Caco-2 (cell line): ENCODE measurements at regions of chr5 and their contacts with region 1.

Region 1: DNA sequence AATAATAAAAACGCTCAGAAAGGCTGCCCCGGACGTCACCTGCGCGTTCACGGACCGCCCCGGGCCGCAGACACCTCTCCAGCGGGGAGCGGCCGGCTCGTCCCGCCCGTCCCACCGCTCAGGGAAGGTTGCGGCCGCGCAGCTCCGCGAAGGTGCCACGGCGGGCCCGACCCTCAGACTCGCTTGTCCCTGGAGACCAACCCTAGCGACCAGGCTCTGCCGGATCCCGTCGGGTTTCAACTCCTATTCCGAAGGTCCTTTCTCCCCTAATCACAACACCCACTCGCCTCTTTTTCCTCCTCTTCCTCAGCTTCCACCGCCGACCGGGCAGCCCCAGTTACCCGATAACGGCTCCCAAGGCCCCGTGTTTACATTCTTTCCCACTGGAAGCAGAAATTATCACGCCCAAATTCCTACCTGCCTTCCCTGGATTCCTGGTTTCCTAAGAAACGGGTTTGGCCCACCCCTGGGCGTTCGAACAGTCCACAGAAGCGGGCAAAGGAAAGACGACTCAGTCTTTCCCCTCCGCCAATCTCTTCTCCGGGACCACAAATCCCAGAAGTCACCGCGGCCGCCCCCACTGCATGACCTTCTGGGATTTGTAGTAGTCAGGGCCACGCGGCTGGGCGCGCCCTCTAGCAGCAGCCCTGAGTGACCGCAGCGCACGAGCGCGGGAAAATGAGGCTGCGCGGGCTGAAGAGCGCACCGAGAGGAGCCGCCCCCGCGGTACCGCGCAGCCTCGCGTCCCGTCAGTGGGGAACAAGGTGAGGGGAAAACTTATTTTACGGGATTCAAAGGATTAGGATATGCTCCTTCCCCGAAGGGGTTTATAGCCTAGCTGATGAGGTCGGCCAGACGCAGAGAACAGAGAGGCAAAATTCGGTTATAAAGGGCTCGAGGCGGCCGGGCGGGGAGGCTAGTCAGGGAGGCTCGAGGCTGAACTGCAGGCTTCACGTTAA is at the start of gene TTC33:
- DNase-seq: peak; percentile 95 to 96
- H3K4me3 ChIP-seq: peak within 1 kb of the TSS; percentile 56
- H3K4me3 Mint-ChIP-seq: no peak within 1 kb of the TSS
- H3K27ac Mint-ChIP-seq: no peak within 1 kb of the TSS
- H3K4me1 ChIP-seq: peaks cover 8% of the 10 kb centered on the region; the same call in 1 of the 2 replicates
- H3K4me1 Mint-ChIP-seq: no peaks in the 10 kb centered on the region
- H3K27me3 ChIP-seq: no peaks in the 10 kb centered on the region
- H3K27me3 Mint-ChIP-seq: no peaks in the 10 kb centered on the region
- CTCF ChIP-seq: peak; percentile 55 to 89
- total RNA-seq, gene TTC33: 8.6 and 10.4 TPM in 2 replicates

Region 2: DNA sequence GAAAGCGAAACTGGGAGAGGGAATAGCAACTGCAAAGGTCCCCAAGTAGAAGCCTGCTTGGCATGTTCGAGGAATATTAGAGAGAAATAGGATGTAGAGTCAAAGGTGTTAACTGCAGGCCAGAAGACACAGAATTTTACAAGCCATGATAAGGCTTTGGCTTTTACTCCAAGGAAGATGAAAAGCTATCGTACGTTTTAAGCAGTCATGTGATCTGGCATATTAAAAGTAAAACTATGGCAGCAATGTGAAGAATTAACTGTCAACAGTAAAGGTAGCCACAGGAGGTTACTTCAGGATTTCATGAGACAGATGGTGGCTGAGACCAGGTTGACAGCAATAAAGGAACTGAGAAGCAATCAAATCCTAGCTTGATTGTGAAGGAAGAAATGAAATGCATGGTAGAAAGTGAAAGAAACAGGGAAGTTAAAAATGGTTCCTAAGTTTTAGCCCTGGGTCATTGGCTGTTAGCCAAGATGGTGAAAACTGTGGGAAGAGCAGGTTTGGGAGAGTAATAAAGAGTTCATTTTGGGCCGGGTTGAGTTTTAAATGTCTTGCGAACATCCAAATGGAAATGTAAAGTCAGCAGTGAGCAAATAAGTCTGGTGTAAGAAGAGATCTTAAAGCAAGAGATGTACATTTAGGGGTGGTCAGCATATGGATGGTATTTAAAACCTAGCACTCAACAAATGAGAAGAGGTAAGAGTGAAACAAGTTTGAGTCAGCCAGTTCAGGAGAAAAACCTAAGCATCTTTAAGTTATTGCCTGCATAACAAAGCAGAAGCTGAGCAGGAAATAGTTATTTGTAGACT is 20.4 kb after region 1 on chr5:
- CTCF ChIA-PET with region 1: no interaction called
- POLR2A ChIA-PET with region 1: no interaction called
- intact Hi-C with region 1: loop called (anchors 2 kb)
- DNase-seq: no peak
- H3K4me3 ChIP-seq: no peak overlapping the region
- H3K4me3 Mint-ChIP-seq: no peak overlapping the region
- H3K27ac Mint-ChIP-seq: peak overlapping the region; percentile 44
- H3K4me1 ChIP-seq: peaks cover 19% of the 10 kb centered on the region
- H3K4me1 Mint-ChIP-seq: peaks cover 18% of the 10 kb centered on the region
- H3K27me3 ChIP-seq: no peaks in the 10 kb centered on the region
- H3K27me3 Mint-ChIP-seq: no peaks in the 10 kb centered on the region
- CTCF ChIP-seq: no peak

Region 3: GRCh38 chr5:40784027-40784653 is 28.5 kb after region 1 on chr5:
- CTCF ChIA-PET with region 1: interaction called, 3 read pairs
- POLR2A ChIA-PET with region 1: no interaction called
- intact Hi-C with region 1: loop called (anchors 2 kb)
- DNase-seq: peak; percentile 80 to 90
- H3K4me3 ChIP-seq: no peak overlapping the region
- H3K4me3 Mint-ChIP-seq: peak overlapping the region; percentile 61
- H3K27ac Mint-ChIP-seq: peak overlapping the region; percentile 67
- H3K4me1 ChIP-seq: peaks cover 46% of the 10 kb centered on the region
- H3K4me1 Mint-ChIP-seq: peaks cover 31% of the 10 kb centered on the region
- H3K27me3 ChIP-seq: no peaks in the 10 kb centered on the region
- H3K27me3 Mint-ChIP-seq: no peaks in the 10 kb centered on the region
- CTCF ChIP-seq: no peak

Region 4: GRCh38 chr5:40798012-40798855 is 42.5 kb after region 1 on chr5 and contains the start of gene PRKAA1:
- CTCF ChIA-PET with region 1: interaction called, 4 read pairs
- POLR2A ChIA-PET with region 1: interaction called, 3 read pairs
- intact Hi-C with region 1: loop called (anchors 1 kb)
- DNase-seq: peak; percentile 86 to 95
- H3K4me3 ChIP-seq: peak within 1 kb of the TSS; percentile 67
- H3K4me3 Mint-ChIP-seq: peak within 1 kb of the TSS; percentile 89
- H3K27ac Mint-ChIP-seq: peak within 1 kb of the TSS; percentile 86
- H3K4me1 ChIP-seq: peaks cover 21% of the 10 kb centered on the region
- H3K4me1 Mint-ChIP-seq: peaks cover 25% of the 10 kb centered on the region
- H3K27me3 ChIP-seq: no peaks in the 10 kb centered on the region
- H3K27me3 Mint-ChIP-seq: no peaks in the 10 kb centered on the region
- CTCF ChIP-seq: peak; percentile 77 to 90
- total RNA-seq, gene PRKAA1: 64.6 and 69.2 TPM in 2 replicates

Region 5: GRCh38 chr5:40834849-40835787 is 79.4 kb after region 1 on chr5 and contains the start of gene RPL37:
- CTCF ChIA-PET with region 1: no interaction called
- POLR2A ChIA-PET with region 1: no interaction called
- intact Hi-C with region 1: loop called (anchors 1 kb)
- DNase-seq: peak; percentile 95 to 97
- H3K4me3 ChIP-seq: peak within 1 kb of the TSS; percentile 64
- H3K4me3 Mint-ChIP-seq: peak within 1 kb of the TSS; percentile 99
- H3K27ac Mint-ChIP-seq: peak within 1 kb of the TSS; percentile 98
- H3K4me1 ChIP-seq: peaks cover 18% of the 10 kb centered on the region
- H3K4me1 Mint-ChIP-seq: peaks cover 8% of the 10 kb centered on the region
- H3K27me3 ChIP-seq: no peaks in the 10 kb centered on the region
- H3K27me3 Mint-ChIP-seq: no peaks in the 10 kb centered on the region
- CTCF ChIP-seq: no peak
- total RNA-seq, gene RPL37: 1,699 and 1,723 TPM in 2 replicates

Region 6: DNA sequence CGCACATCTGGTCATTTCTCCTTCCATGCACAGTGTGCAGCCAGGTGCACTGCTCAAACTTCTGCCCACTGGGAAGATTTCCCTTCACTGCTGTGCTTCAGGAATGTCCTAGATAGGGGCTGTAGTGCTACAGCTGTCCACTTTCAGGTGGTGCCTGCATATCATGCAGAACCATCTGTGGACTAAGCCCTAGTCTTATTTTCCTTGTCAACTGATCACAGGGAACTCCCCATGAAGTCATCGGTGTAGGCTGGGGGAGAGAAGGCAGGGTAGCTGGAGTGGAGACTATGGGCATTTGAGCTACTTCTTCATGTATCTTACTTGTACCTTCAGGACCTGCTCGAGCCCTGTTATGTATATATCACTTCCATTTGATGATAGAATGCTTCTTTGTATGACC is 905.6 kb after region 1 on chr5:
- CTCF ChIA-PET with region 1: no interaction called
- POLR2A ChIA-PET with region 1: no interaction called
- intact Hi-C with region 1: no loop called
- DNase-seq: no peak
- H3K4me3 ChIP-seq: no peak overlapping the region
- H3K4me3 Mint-ChIP-seq: no peak overlapping the region
- H3K27ac Mint-ChIP-seq: no peak overlapping the region
- H3K4me1 ChIP-seq: no peaks in the 10 kb centered on the region
- H3K4me1 Mint-ChIP-seq: no peaks in the 10 kb centered on the region
- H3K27me3 ChIP-seq: no peaks in the 10 kb centered on the region
- H3K27me3 Mint-ChIP-seq: no peaks in the 10 kb centered on the region
- CTCF ChIP-seq: no peak